H1 (cell line): ENCODE measurements at regions of chr12 and their contacts with region 1.

Region 1: GRCh38 chr12:57005980-57006808 is at the start of gene ZBTB39:
- DNase-seq: peak in 1 of 2 experiments; percentile 81
- H3K4me3 ChIP-seq: peak within 1 kb of the TSS; percentile 73 to 96 (median 82)
- H3K27ac ChIP-seq: peak within 1 kb of the TSS; percentile 60; the same call in 1 of the 2 replicates
- H3K4me1 ChIP-seq: peaks cover 2 to 14% (median 8%) of the 10 kb centered on the region in 4 experiments; a peak in 6 of 7 replicates
- H3K27me3 ChIP-seq: no peaks in the 10 kb centered on the region
- CTCF ChIP-seq: peak; percentile 35 to 88 (median 62)
- EP300 ChIP-seq: no peak
- POLR2A ChIP-seq: peak; percentile 56 to 69; a peak in 2 of 3 replicates
- RAD21 ChIP-seq: 0 out of 4 replicates have a peak, but pooled peaks of 1 of the 2 experiments have one; percentile 5
- total RNA-seq, gene ZBTB39: 24.5 and 25.0 TPM in 2 replicates

Region 2: DNA sequence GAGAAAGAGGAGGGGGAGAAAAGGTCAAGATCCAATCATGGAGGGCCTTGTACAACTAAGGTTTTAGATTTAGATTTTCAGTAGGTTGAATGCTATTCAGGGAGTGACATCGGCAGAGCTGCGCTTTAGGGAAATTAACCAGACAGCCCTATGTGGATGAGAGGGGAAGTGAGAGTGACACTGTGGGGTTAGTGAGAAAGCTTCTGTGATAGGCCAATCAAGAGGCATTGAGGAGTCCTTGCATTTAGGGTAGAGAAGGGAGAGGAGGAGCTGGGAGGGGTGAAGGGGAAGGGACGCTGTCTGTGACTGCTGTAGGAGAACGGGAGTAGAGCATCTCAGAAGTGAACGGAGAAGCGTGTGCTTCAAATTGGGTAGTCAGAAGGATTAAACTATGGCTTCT is 239.7 kb before region 1 on chr12:
- CTCF ChIA-PET with region 1: interaction called, 187 read pairs
- POLR2A ChIA-PET with region 1: interaction called, 3 read pairs
- DNase-seq: no peak
- H3K4me3 ChIP-seq: no peak overlapping the region
- H3K27ac ChIP-seq: no peak overlapping the region
- H3K4me1 ChIP-seq: peaks cover 0 to 7% (median 2%) of the 10 kb centered on the region in 4 experiments; a peak in 2 of 7 replicates
- H3K27me3 ChIP-seq: no peaks in the 10 kb centered on the region
- CTCF ChIP-seq: no peak
- EP300 ChIP-seq: no peak
- POLR2A ChIP-seq: no peak
- RAD21 ChIP-seq: no peak

Region 3: GRCh38 chr12:56803750-56804149 is 202.4 kb before region 1 on chr12:
- CTCF ChIA-PET with region 1: interaction called, 11 read pairs
- POLR2A ChIA-PET with region 1: no interaction called
- DNase-seq: no peak
- H3K4me3 ChIP-seq: no peak overlapping the region
- H3K27ac ChIP-seq: no peak overlapping the region
- H3K4me1 ChIP-seq: no peaks in the 10 kb centered on the region; a peak in 1 of 7 replicates
- H3K27me3 ChIP-seq: no peaks in the 10 kb centered on the region
- CTCF ChIP-seq: no peak
- EP300 ChIP-seq: no peak
- POLR2A ChIP-seq: no peak
- RAD21 ChIP-seq: no peak

Region 4: GRCh38 chr12:56839915-56840325 is 166.3 kb before region 1 on chr12:
- CTCF ChIA-PET with region 1: interaction called, 55 read pairs
- POLR2A ChIA-PET with region 1: interaction called, 3 read pairs
- DNase-seq: peak; percentile 51 to 72
- H3K4me3 ChIP-seq: no peak overlapping the region
- H3K27ac ChIP-seq: no peak overlapping the region
- H3K4me1 ChIP-seq: no peaks in the 10 kb centered on the region
- H3K27me3 ChIP-seq: no peaks in the 10 kb centered on the region
- CTCF ChIP-seq: peak; percentile 86 to 96 (median 94)
- EP300 ChIP-seq: no peak
- POLR2A ChIP-seq: no peak
- RAD21 ChIP-seq: peak; percentile 96 to 98

Region 5: DNA sequence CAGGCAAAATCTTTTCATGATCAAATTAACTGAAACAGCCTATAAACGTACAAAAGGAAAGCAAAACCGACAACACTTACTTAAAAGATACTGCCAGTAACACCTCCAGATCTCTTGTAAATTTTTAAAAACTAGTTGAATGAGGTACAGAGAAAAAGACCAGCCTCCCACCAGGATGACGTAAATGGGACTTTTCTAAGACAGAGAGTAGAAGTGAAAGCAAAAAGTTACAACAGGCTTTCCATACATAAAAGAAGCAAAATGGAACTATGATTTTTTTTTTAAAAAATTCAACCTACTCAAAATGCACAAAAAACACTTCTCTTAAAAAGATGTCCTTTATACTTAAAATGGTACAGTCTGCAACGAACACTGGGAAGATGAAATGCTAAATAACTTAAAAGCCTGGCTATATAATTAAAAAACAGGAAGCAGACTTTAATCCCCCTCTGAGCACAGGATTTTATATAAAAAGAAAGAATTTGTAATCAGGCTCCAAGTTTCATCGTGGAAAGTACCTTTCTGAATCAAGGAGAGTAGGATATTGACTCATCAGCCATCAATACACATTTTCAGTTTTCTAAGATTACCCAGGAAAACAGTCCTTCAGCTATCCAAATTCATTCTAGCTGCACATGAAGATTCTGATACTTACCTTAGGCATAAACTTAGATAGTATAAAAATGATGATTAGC is 57.9 kb after region 1 on chr12:
- CTCF ChIA-PET with region 1: interaction called, 45 read pairs
- POLR2A ChIA-PET with region 1: interaction called, 5 read pairs
- DNase-seq: no peak
- H3K4me3 ChIP-seq: no peak overlapping the region
- H3K27ac ChIP-seq: no peak overlapping the region
- H3K4me1 ChIP-seq: no peaks in the 10 kb centered on the region
- H3K27me3 ChIP-seq: no peaks in the 10 kb centered on the region
- CTCF ChIP-seq: no peak
- EP300 ChIP-seq: no peak
- POLR2A ChIP-seq: no peak
- RAD21 ChIP-seq: no peak